ENCODE measurements at regions of chr22 and their contacts with region 1.

Region 1: GRCh38 chr22:31970490-31971444 is 26.4 kb downstream of the YWHAH start:
- DNase-seq: peak; percentile 86
- ATAC-seq: peak; percentile 99
- H3K4me3 Mint-ChIP-seq: peak overlapping the region; percentile 66
- H3K27ac Mint-ChIP-seq: no peak overlapping the region
- H3K4me1 Mint-ChIP-seq: peaks cover 12% of the 10 kb centered on the region
- H3K27me3 Mint-ChIP-seq: no peaks in the 10 kb centered on the region
- CTCF ChIP-seq: peak; percentile 92

Region 2: DNA sequence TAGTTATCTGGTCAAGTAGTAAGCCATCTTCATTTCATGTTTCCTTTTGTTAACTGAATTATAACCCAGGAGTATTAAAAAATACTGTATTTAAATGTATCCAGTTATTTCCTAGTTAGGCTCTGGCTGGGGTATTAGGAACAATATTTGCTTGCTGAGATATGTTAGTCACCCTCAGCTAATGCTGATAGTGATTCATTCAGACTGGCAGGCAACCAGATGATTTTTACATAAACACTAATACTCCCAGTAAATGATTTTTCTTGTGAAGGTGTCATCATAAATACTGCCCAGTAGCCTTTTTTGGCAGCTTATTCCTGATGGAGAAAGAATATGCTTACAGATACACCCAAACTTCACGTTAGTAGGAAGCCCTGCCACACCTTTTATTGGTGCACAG is 18.3 kb before region 1 on chr22:
- CTCF ChIA-PET with region 1: interaction called, 46 read pairs
- POLR2A ChIA-PET with region 1: no interaction called
- intact Hi-C with region 1: no loop called
- DNase-seq: no peak
- ATAC-seq: no peak
- H3K4me3 Mint-ChIP-seq: no peak overlapping the region
- H3K27ac Mint-ChIP-seq: peak overlapping the region; percentile 53
- H3K4me1 Mint-ChIP-seq: peaks cover 73% of the 10 kb centered on the region
- H3K27me3 Mint-ChIP-seq: no peaks in the 10 kb centered on the region
- CTCF ChIP-seq: no peak

Region 3: GRCh38 chr22:32080904-32081303 is 110.1 kb after region 1 on chr22:
- CTCF ChIA-PET with region 1: interaction called, 75 read pairs
- POLR2A ChIA-PET with region 1: no interaction called
- intact Hi-C with region 1: loop called (anchors 5 kb)
- DNase-seq: peak; percentile 34
- ATAC-seq: peak; percentile 61
- H3K4me3 Mint-ChIP-seq: no peak overlapping the region
- H3K27ac Mint-ChIP-seq: no peak overlapping the region
- H3K4me1 Mint-ChIP-seq: no peaks in the 10 kb centered on the region
- H3K27me3 Mint-ChIP-seq: peaks cover 6% of the 10 kb centered on the region
- CTCF ChIP-seq: peak; percentile 77

Measured in activated CD8-positive, alpha-beta T cell treated with anti-CD3 and anti-CD28 coated beads for 36 hours (primary cell).